MCF 10A (cell line): ENCODE measurements at regions of chr1 and their contacts with region 1.

Region 1: DNA sequence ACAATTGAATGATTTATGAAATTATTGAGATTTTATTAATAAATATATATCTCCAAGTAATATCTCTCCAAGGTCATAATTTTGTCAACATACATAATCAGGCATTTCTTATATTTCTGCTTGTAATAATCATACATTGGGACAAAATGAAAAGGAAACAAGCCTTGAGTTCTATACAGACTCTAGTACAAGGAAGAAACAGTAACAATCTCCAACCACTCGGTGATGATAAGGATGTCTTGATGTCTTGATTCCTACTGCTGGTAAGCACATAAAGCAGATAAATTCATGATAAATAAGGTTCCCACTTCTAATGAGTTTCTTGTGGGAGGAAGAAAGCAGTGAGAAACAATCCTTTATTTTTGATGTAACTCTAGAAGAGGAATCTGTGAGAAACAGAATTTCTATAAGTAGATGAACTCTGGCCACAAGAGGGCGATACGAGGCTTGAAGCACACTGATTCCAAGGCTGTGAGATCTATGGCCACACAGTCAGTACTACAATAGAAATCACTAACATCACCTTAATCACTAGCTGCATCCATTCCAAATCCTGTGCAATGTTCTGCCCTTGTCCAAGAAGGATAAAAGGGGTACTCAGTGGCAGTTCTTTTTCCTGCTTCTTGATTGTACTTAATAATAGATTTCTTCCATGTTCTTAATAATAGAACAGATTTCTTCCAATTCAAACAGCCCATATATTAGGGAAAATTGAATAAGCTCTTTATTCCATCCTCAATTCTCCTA is 41.4 kb upstream of the LRRC8B start:
- DNase-seq: peak; percentile 79
- H3K4me3 Mint-ChIP-seq: no peak overlapping the region
- H3K27ac Mint-ChIP-seq: no peak overlapping the region
- H3K4me1 Mint-ChIP-seq: no peaks in the 10 kb centered on the region
- H3K27me3 Mint-ChIP-seq: no peaks in the 10 kb centered on the region
- CTCF ChIP-seq: peak; percentile 58

Region 2: GRCh38 chr1:89286549-89287180 is 196.5 kb before region 1 on chr1:
- CTCF ChIA-PET with region 1: no interaction called
- POLR2A ChIA-PET with region 1: no interaction called
- intact Hi-C with region 1: no loop called
- DNase-seq: no peak
- H3K4me3 Mint-ChIP-seq: no peak overlapping the region
- H3K27ac Mint-ChIP-seq: no peak overlapping the region
- H3K4me1 Mint-ChIP-seq: no peaks in the 10 kb centered on the region
- H3K27me3 Mint-ChIP-seq: no peaks in the 10 kb centered on the region
- CTCF ChIP-seq: no peak

Region 3: GRCh38 chr1:89499320-89499719 is 16.1 kb after region 1 on chr1:
- CTCF ChIA-PET with region 1: interaction called, 10 read pairs
- POLR2A ChIA-PET with region 1: interaction called, 4 read pairs
- intact Hi-C with region 1: no loop called
- DNase-seq: no peak
- H3K4me3 Mint-ChIP-seq: no peak overlapping the region
- H3K27ac Mint-ChIP-seq: no peak overlapping the region
- H3K4me1 Mint-ChIP-seq: peaks cover 5% of the 10 kb centered on the region
- H3K27me3 Mint-ChIP-seq: no peaks in the 10 kb centered on the region
- CTCF ChIP-seq: no peak

Region 4: GRCh38 chr1:89598450-89599331 is 115.5 kb after region 1 on chr1:
- CTCF ChIA-PET with region 1: interaction called, 53 read pairs
- POLR2A ChIA-PET with region 1: interaction called, 4 read pairs
- intact Hi-C with region 1: loop called (anchors 1 kb)
- DNase-seq: peak; percentile 61
- H3K4me3 Mint-ChIP-seq: no peak overlapping the region
- H3K27ac Mint-ChIP-seq: no peak overlapping the region
- H3K4me1 Mint-ChIP-seq: peaks cover 21% of the 10 kb centered on the region
- H3K27me3 Mint-ChIP-seq: no peaks in the 10 kb centered on the region
- CTCF ChIP-seq: peak; percentile 53

Region 5: DNA sequence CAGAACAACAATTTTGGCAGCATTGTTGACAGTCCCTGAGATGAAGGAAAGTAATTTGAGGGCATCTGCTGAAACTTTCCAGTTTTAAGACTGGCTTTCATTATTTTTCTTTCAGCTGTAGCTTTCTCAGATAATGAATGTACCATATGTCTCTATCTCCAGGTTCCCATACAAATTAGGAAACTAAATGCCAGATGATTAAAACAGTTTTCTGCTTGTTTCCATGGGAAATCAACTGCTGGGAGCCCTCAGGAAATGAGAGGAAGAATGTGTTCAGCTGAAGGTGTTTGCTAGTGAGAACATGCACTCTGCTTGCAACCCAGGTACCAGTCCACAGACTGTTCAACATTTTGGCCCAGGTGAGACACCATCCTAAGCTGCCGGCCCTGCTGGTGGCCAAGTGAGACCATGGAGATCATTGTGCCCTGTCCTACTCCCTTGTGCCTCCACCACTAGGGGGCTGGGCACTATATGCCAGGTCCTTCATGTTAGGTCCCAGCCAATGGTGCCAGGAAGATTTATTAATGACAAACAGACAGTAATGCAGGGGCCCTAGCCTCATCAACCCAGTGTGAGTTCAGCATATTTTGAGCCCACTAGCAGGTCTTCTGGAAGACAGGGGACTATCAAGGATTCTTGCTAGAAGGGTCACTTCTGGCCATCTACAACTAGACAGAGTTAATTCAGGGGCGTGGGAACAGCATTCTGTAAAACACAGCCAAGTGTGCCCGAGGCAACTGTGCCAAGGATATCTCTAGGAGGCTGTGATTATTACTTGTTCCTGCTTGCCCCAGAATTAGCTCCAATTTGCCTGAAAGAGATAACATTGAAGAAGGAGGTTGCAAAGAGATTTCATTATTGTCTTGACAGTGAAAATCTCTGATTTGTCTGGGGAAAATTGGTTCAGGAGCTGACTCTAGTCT is 132.8 kb after region 1 on chr1:
- CTCF ChIA-PET with region 1: interaction called, 10 read pairs
- POLR2A ChIA-PET with region 1: no interaction called
- intact Hi-C with region 1: no loop called
- DNase-seq: peak; percentile 44
- H3K4me3 Mint-ChIP-seq: no peak overlapping the region
- H3K27ac Mint-ChIP-seq: peak overlapping the region; percentile 66
- H3K4me1 Mint-ChIP-seq: peaks cover 15% of the 10 kb centered on the region
- H3K27me3 Mint-ChIP-seq: no peaks in the 10 kb centered on the region
- CTCF ChIP-seq: peak; percentile 17

Region 6: GRCh38 chr1:89953072-89953626 is 470.0 kb after region 1 on chr1:
- CTCF ChIA-PET with region 1: no interaction called
- POLR2A ChIA-PET with region 1: no interaction called
- intact Hi-C with region 1: loop called (anchors 10 kb)
- DNase-seq: peak; percentile 87
- H3K4me3 Mint-ChIP-seq: no peak overlapping the region
- H3K27ac Mint-ChIP-seq: peak overlapping the region; percentile 64
- H3K4me1 Mint-ChIP-seq: peaks cover 17% of the 10 kb centered on the region
- H3K27me3 Mint-ChIP-seq: no peaks in the 10 kb centered on the region
- CTCF ChIP-seq: peak; percentile 24